Ascending aorta (tissue), 2 donors: ENCODE measurements at regions of chr15 and their contacts with region 1.

Region 1: DNA sequence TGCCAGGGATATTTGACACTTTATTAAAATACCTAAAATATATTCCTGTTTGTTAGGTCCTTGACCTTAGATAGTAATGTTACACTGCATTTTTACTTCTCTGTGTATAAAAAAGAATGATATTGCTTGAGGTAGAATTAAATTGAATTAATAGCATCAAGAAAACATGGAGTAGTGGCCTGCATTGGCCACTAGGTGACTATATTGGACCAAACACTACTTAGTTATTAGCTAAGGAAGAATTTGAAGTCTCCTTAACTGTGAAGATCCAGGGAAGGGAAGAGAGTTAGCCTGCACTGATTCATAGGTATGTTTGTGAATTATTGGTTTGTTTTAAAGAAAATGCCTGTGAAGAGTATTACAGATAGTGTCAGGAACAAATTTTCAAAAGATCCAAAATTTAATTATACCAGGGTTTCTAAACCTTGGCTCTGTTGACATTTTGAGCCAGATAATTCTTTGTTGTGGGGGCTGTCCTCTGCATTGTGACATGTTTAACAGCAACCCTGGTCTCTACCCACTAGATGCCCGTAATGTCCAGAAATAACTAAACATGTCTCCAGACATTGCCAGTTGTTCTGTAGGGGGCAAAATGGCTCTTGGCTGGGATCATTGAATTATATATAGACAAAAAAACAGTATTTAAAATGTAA is 103.6 kb upstream of the THSD4 start:
- DNase-seq: no peak
- H3K4me3 ChIP-seq: no peak overlapping the region
- H3K27ac ChIP-seq: no peak overlapping the region
- H3K4me1 ChIP-seq: no peaks in the 10 kb centered on the region
- H3K27me3 ChIP-seq: no peaks in the 10 kb centered on the region
- CTCF ChIP-seq: peak; percentile 59 to 79 (median 61)

Region 2: DNA sequence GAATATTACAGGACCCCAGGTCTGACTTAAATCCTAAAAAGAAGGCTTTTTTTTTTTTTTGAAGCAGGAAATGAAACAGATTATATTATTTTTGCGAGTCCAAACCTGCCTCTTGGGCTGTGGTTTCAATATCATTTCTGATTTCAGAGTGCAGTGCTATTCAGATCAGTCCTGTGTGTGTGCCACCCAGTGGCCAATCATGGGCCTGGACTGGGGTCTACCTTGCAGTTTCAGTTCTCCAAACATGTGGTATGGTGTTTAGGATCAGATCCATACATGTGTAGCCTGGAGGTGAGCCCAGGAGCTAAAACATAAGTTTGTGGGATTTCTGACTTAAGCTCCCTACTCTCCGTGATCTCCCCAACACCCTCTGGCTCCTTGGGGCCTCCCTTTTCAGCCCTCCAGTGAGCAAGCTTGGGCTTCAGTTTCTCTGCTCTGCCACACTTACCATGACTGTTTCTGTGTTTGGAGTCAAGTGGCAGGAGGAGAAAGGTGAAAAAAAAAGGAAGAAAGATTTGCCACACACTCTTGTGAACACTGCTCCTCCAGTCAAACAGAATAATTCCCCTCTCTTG is 91.6 kb after region 1 on chr15:
- intact Hi-C with region 1: loop called (anchors 2 kb)
- DNase-seq: no peak
- H3K4me3 ChIP-seq: no peak overlapping the region
- H3K27ac ChIP-seq: no peak overlapping the region
- H3K4me1 ChIP-seq: no peaks in the 10 kb centered on the region
- H3K27me3 ChIP-seq: no peaks in the 10 kb centered on the region
- CTCF ChIP-seq: peak; percentile 26 to 53 (median 49)

Region 3: GRCh38 chr15:71440489-71441110 is 429.0 kb after region 1 on chr15:
- intact Hi-C with region 1: loop called (anchors 2 kb)
- DNase-seq: no peak
- H3K4me3 ChIP-seq: no peak overlapping the region
- H3K27ac ChIP-seq: no peak overlapping the region
- H3K4me1 ChIP-seq: peaks cover 1 to 19% of the 10 kb centered on the region in 2 donors
- H3K27me3 ChIP-seq: no peaks in the 10 kb centered on the region
- CTCF ChIP-seq: peak; percentile 60 to 75 (median 62)